MCF 10A (cell line): ENCODE measurements at regions of chr3 and their contacts with region 1.

Region 1: GRCh38 chr3:193060748-193061546 is 143.3 kb upstream of the MB21D2 start:
- DNase-seq: no peak
- H3K4me3 Mint-ChIP-seq: no peak overlapping the region
- H3K27ac Mint-ChIP-seq: no peak overlapping the region
- H3K4me1 Mint-ChIP-seq: no peaks in the 10 kb centered on the region
- H3K27me3 Mint-ChIP-seq: peaks cover 71% of the 10 kb centered on the region
- CTCF ChIP-seq: no peak

Region 2: DNA sequence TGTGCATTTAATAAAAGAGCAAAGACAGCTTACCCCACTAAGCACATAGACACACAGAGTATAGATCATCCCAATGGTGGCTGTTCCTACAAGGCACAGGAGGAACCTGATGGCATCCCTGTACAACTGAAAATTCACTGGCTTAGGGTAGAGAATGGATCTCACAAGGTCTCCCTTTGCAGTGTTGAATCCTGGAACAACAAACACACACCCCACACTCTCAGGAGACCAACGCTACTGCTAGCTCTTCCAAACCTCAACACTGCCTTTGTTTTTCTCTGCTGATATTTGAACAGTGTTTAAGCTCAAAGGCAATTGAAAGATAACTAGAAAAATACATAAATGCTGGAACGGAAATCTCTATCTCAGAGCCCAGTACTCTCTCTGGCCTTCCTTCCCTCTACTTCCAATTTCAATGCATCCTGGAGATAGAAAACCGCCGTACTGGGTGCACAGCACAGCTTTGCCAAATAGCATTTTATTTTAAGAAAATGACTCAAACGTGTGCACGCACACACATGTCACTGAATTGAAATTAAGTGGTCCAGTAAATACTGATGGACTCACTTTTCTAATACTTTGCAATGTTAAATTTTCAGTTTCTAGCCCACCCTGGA is 405.2 kb after region 1 on chr3:
- CTCF ChIA-PET with region 1: interaction called, 3 read pairs
- POLR2A ChIA-PET with region 1: no interaction called
- intact Hi-C with region 1: loop called (anchors 10 kb)
- DNase-seq: no peak
- H3K4me3 Mint-ChIP-seq: no peak overlapping the region
- H3K27ac Mint-ChIP-seq: no peak overlapping the region
- H3K4me1 Mint-ChIP-seq: no peaks in the 10 kb centered on the region
- H3K27me3 Mint-ChIP-seq: peaks cover 46% of the 10 kb centered on the region
- CTCF ChIP-seq: no peak